ENCODE measurements at regions of chr9 and their contacts with region 1.

Region 1: DNA sequence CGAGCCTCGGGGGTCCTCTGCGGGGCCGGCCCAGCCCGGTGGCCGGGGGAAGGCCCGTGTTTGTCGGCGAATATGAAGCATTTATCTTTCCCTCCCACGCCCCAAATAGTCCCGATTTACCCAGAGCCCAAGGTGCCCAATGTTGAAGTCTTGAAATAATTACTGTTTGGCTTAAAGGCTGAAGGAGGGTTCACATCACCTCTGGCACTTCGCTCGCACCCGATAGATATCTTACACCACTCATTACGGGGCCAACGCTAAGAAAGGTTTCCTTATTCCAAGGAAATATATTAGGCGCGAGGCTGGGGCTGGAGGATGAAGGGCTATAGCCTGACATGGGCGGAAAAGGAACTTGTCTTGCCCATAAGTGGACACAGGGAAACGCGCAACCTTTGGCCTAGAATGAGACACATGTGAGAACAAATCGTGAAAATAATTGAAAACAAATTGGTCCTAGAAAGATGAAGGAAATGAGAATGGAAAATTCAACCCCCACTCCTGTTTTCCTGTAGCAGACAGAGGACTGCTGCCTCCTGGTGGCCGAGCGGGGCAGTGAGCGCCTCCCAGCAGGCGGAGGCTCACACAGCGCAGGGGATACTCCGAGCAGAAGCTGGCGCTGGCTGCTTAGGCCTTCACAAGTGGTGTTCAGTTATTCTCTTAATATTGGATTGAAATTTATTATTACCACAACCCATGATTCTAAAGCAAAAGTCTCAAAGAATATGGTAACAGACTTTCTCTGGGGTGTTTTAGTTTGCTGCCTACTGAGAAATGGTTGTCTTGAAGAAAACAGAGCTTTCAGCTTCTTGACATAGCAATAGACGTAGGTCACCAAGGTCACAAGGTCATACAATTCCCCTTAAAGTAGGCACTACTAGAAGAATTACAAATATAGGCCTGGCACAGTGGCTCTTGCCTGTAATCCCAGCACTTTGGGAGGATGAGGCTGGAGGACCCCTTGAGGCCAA is 7.9 kb downstream of the CCL21 start:
- DNase-seq: peak; percentile 62
- ATAC-seq: peak; percentile 93
- H3K4me3 ChIP-seq: peak overlapping the region; percentile 54 to 79
- H3K27ac ChIP-seq: peak overlapping the region; percentile 49; the same call in 1 of the 2 replicates
- H3K4me1 ChIP-seq: no peaks in the 10 kb centered on the region; the same call in 1 of the 2 replicates
- H3K27me3 ChIP-seq: no peaks in the 10 kb centered on the region; the same call in 1 of the 2 replicates
- CTCF ChIP-seq: peak; percentile 99

Region 2: DNA sequence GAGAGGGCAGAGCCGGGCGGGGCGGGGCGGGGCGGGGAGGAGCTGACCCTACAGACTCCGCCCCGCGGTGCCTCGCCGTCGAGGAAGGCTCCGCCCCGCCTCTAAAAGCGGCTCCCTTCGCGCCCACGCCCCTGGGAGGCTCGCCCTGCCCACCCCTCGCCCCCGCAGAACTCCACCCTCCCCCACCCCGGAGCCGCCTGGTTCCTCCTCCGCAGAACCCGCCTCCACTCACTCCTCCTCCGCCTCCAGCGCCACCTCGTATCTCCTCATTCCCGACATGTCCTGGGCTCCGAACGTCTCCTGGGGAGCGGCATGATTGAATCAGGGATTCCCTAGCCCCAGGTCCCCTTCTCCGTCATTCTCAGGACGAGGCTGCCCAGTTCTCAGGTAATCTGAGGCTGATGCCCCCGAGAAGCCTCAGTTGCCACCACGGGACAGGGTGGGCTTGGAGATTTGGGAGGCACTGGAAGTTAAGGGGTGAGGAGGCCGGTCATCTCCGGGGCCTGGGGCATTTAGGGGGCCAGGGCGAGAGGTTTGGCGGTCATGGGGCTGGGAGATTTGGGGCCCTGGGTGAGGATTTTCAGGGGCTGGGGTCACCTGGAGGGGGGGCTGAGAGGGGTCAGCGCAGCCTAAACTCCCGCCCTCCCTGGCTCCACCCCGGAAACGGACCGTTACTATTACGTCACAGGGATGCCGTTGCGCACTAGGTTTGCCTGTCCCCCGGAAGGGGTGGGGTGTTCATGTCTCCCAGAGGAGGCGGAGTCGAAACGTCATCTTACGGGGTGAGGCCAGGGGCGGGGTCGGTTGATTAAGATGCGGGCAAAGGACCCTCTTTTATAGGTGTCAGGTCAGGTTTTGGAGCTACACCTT is 36.4 kb before region 1 on chr9:
- CTCF ChIA-PET with region 1: interaction called, 11 read pairs
- POLR2A ChIA-PET with region 1: no interaction called
- in situ Hi-C with region 1: no loop called
- intact Hi-C with region 1: no loop called
- DNase-seq: peak; percentile 67
- ATAC-seq: peak; percentile 91
- H3K4me3 ChIP-seq: peak overlapping the region; percentile 94 to 98
- H3K27ac ChIP-seq: peak overlapping the region; percentile 97
- H3K4me1 ChIP-seq: peaks cover 8% of the 10 kb centered on the region; the same call in 1 of the 2 replicates
- H3K27me3 ChIP-seq: no peaks in the 10 kb centered on the region
- CTCF ChIP-seq: no peak

Region 3: GRCh38 chr9:34675048-34675714 is 26.9 kb before region 1 on chr9:
- CTCF ChIA-PET with region 1: interaction called, 22 read pairs
- POLR2A ChIA-PET with region 1: interaction called, 3 read pairs
- in situ Hi-C with region 1: no loop called
- intact Hi-C with region 1: loop called (anchors 1 kb)
- DNase-seq: no peak
- ATAC-seq: peak; percentile 95
- H3K4me3 ChIP-seq: no peak overlapping the region
- H3K27ac ChIP-seq: no peak overlapping the region
- H3K4me1 ChIP-seq: no peaks in the 10 kb centered on the region
- H3K27me3 ChIP-seq: no peaks in the 10 kb centered on the region
- CTCF ChIP-seq: peak; percentile 96

Region 4: GRCh38 chr9:34686231-34686630 is 15.8 kb before region 1 on chr9:
- CTCF ChIA-PET with region 1: interaction called, 10 read pairs
- POLR2A ChIA-PET with region 1: interaction called, 4 read pairs
- in situ Hi-C with region 1: no loop called
- intact Hi-C with region 1: no loop called
- DNase-seq: no peak
- ATAC-seq: no peak
- H3K4me3 ChIP-seq: no peak overlapping the region
- H3K27ac ChIP-seq: no peak overlapping the region
- H3K4me1 ChIP-seq: no peaks in the 10 kb centered on the region
- H3K27me3 ChIP-seq: no peaks in the 10 kb centered on the region
- CTCF ChIP-seq: no peak

Region 5: DNA sequence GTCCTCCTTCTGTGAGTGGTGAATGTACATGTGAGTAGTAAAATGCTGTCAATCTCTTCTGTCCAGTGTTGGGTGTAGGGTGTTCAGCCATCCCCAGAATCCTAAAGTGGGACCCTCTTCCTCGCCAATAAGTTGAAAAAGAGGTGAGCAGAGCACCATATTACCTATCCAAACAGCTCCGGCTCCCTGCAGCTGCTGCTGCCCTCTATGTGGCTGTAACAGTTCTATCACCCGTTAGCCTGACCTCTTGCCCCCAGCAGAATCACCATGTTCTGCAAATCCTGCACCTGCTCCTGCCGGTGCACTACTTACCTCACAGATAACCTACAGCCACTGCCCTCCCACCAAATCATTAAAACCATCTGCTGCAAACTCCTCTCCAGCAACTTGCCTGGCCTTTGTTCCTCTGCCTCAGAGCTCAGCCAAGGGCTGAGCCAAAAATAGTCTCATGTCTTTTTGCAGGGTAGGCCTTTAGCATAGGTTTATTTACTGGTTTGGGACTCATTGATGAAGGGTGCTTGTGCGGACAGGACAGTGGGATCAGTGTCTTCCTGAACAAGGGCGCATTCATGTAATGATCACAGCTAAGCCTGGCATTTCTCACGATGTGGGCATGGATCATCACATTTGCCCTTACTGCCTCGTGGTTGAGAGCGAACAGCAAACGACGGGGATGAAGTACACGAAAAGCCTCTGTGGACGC is 57.5 kb after region 1 on chr9:
- CTCF ChIA-PET with region 1: interaction called, 11 read pairs
- POLR2A ChIA-PET with region 1: no interaction called
- in situ Hi-C with region 1: no loop called
- intact Hi-C with region 1: no loop called
- DNase-seq: no peak
- ATAC-seq: no peak
- H3K4me3 ChIP-seq: no peak overlapping the region
- H3K27ac ChIP-seq: no peak overlapping the region
- H3K4me1 ChIP-seq: no peaks in the 10 kb centered on the region
- H3K27me3 ChIP-seq: no peaks in the 10 kb centered on the region
- CTCF ChIP-seq: no peak

Measured in Panc1 (cell line).